Calu3 (cell line): ENCODE measurements at regions of chr11 and their contacts with region 1.

Region 1: DNA sequence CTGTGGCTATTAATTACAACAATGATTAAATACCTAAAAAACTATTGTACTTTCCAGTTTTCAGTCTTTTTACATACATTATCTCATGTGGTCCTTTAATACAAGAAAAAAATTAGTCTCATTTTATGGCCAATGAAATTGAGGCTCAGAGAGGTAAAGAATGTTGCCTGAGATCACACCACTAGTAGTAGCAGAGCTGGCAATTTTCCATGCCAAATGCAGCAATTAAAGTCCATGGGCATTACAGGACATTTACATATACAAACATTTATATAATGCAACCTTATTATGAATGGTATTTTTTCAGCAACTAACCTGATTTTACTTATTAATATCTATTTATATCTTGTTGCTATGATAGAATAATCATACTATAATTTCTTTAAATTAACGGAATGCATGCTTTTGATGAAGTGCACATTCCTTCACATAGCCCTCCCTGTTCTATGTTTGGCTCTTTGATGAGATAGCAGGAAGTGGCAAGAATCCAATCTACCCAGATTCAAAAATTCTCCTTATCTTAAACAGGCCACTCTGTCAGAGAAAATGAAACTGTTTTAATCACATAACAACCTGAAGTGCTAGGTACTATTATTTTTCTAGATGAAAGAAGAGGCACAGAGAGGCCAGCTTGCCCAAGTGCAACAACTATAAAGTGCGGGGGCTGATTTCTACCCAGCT is 120.9 kb upstream of the LDLRAD3 start:
- DNase-seq: no peak
- H3K4me3 Mint-ChIP-seq: no peak overlapping the region
- H3K27ac Mint-ChIP-seq: no peak overlapping the region
- H3K4me1 Mint-ChIP-seq: peaks cover 14% of the 10 kb centered on the region
- H3K27me3 Mint-ChIP-seq: no peaks in the 10 kb centered on the region
- CTCF ChIP-seq: no peak

Region 2: GRCh38 chr11:35617687-35618496 is 205.1 kb before region 1 on chr11 and contains the start of gene FJX1:
- CTCF ChIA-PET with region 1: interaction called, 16 read pairs
- intact Hi-C with region 1: loop called (anchors 1 kb)
- DNase-seq: peak; percentile 66
- H3K4me3 Mint-ChIP-seq: peak within 1 kb of the TSS; percentile 87
- H3K27ac Mint-ChIP-seq: peak within 1 kb of the TSS; percentile 88
- H3K4me1 Mint-ChIP-seq: peaks cover 48% of the 10 kb centered on the region
- H3K27me3 Mint-ChIP-seq: peaks cover 17% of the 10 kb centered on the region
- CTCF ChIP-seq: no peak
- total RNA-seq, gene FJX1: 19.1 and 19.8 TPM in 2 replicates

Region 3: DNA sequence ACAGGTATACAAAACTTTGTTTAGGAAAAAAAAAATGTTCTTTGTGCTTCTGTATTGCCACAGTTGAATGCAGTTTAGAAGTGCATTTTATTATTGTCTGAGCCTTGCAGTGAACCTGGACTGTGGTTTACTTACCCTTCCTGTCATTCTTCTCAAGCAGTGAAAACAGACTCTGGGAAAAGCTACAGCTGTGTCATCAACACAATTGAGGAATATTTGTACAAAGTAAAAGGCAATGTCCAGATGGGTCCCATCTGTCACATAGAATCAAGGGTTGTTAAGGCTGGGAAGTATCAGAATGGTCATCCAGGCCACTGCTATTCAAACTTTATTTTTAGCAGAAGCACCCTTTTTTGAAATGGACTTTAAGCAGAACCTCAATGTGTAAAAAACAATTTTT is 87.1 kb before region 1 on chr11:
- CTCF ChIA-PET with region 1: interaction called, 17 read pairs
- intact Hi-C with region 1: no loop called
- DNase-seq: no peak
- H3K4me3 Mint-ChIP-seq: no peak overlapping the region
- H3K27ac Mint-ChIP-seq: peak overlapping the region; percentile 83
- H3K4me1 Mint-ChIP-seq: peaks cover 38% of the 10 kb centered on the region
- H3K27me3 Mint-ChIP-seq: no peaks in the 10 kb centered on the region
- CTCF ChIP-seq: no peak

Region 4: GRCh38 chr11:35892166-35892565 is 69.2 kb after region 1 on chr11:
- CTCF ChIA-PET with region 1: no interaction called
- intact Hi-C with region 1: no loop called
- DNase-seq: no peak
- H3K4me3 Mint-ChIP-seq: no peak overlapping the region
- H3K27ac Mint-ChIP-seq: no peak overlapping the region
- H3K4me1 Mint-ChIP-seq: peaks cover 16% of the 10 kb centered on the region
- H3K27me3 Mint-ChIP-seq: no peaks in the 10 kb centered on the region
- CTCF ChIP-seq: no peak

Region 5: GRCh38 chr11:35943713-35944655 is 121.0 kb after region 1 on chr11 and contains the start of gene LDLRAD3:
- CTCF ChIA-PET with region 1: no interaction called
- intact Hi-C with region 1: loop called (anchors 10 kb)
- DNase-seq: peak; percentile 70
- H3K4me3 Mint-ChIP-seq: peak within 1 kb of the TSS; percentile 96
- H3K27ac Mint-ChIP-seq: peak within 1 kb of the TSS; percentile 85
- H3K4me1 Mint-ChIP-seq: peaks cover 19% of the 10 kb centered on the region
- H3K27me3 Mint-ChIP-seq: peaks cover 11% of the 10 kb centered on the region
- CTCF ChIP-seq: no peak
- total RNA-seq, gene LDLRAD3: 10.9 and 16.2 TPM in 2 replicates

Region 6: DNA sequence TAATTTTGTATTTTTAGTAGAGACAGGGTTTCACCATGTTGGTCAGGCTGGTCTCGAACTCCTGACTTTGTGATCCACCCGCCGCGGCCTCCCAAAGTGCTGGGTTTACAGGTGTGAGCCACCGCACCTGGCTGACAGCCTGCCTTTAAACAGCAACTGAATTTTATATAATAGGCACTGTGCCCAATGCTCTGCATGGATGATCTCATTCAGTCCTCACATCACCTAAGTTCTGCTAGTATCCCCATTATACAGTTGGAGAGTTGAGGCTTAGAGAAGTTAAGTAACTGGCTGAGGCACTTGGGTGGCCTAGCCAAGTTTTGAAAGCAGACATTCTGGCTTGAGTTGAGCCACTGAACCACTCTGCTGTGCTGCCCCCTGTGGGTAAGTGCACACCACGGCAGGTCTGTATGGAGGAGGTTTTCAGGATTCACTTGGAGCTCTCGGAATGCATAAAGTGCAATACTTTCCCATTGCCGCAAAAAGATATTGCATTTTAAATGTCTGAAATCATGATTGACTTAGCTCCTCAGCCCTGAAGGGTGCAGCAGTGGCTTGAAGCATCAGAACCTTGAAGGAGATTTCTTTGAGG is 233.3 kb after region 1 on chr11:
- CTCF ChIA-PET with region 1: interaction called, 11 read pairs
- intact Hi-C with region 1: loop called (anchors 1 kb)
- DNase-seq: peak; percentile 45
- H3K4me3 Mint-ChIP-seq: no peak overlapping the region
- H3K27ac Mint-ChIP-seq: no peak overlapping the region
- H3K4me1 Mint-ChIP-seq: no peaks in the 10 kb centered on the region
- H3K27me3 Mint-ChIP-seq: no peaks in the 10 kb centered on the region
- CTCF ChIP-seq: peak; percentile 46

Region 7: GRCh38 chr11:36149538-36150242 is 326.7 kb after region 1 on chr11:
- CTCF ChIA-PET with region 1: interaction called, 33 read pairs
- intact Hi-C with region 1: loop called (anchors 5 kb)
- DNase-seq: peak; percentile 89
- H3K4me3 Mint-ChIP-seq: peak overlapping the region; percentile 35
- H3K27ac Mint-ChIP-seq: peak overlapping the region; percentile 88
- H3K4me1 Mint-ChIP-seq: peaks cover 46% of the 10 kb centered on the region
- H3K27me3 Mint-ChIP-seq: no peaks in the 10 kb centered on the region
- CTCF ChIP-seq: peak; percentile 61

Region 8: GRCh38 chr11:36265793-36266628 is 443.1 kb after region 1 on chr11:
- CTCF ChIA-PET with region 1: interaction called, 29 read pairs
- intact Hi-C with region 1: loop called (anchors 2 kb)
- DNase-seq: peak; percentile 64
- H3K4me3 Mint-ChIP-seq: no peak overlapping the region
- H3K27ac Mint-ChIP-seq: no peak overlapping the region
- H3K4me1 Mint-ChIP-seq: no peaks in the 10 kb centered on the region
- H3K27me3 Mint-ChIP-seq: peaks cover 52% of the 10 kb centered on the region
- CTCF ChIP-seq: peak; percentile 82